ENCODE measurements at regions of chr14 and their contacts with region 1.

Region 1: GRCh38 chr14:62905566-62905965 is 139.7 kb downstream of the KCNH5 start:
- DNase-seq: no peak
- ATAC-seq: no peak
- H3K4me3 Mint-ChIP-seq: no peak overlapping the region
- H3K27ac Mint-ChIP-seq: no peak overlapping the region
- H3K4me1 Mint-ChIP-seq: peaks cover 16% of the 10 kb centered on the region
- H3K27me3 Mint-ChIP-seq: no peaks in the 10 kb centered on the region
- CTCF ChIP-seq: no peak

Region 2: DNA sequence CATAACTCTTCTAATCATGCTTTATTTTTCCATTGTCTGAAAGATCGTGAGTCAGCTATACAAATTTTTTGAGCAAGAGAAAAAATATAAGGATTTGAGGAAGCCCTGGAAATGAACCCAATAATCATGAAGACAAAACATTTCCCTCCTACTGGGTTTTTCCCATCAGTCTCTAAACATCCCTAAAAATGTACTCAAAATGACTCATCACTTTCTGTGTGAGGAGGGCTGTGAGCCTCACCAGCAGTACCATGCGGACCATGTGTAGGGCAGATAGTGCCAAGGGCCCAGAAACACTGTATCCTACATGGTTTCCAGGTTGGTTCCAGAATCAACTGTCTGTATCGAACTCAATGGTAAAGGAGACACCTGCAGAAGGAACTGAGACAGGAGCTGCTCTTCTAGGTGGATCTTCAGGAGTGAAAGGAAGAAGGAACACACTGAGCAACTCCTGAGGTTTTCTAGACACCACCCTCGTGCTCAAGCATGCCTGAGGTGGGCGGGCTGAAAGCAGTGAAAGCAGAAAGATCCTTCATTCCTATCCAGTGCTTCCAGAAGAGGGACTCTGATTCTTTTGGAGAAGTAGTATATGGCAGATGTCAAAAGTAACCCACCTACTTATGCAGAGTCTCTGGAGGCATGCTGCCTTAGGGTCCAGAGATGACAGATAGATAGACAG is 250.1 kb after region 1 on chr14:
- CTCF ChIA-PET with region 1: no interaction called
- POLR2A ChIA-PET with region 1: interaction called, 11 read pairs
- DNase-seq: no peak
- ATAC-seq: no peak
- H3K4me3 Mint-ChIP-seq: no peak overlapping the region
- H3K27ac Mint-ChIP-seq: no peak overlapping the region
- H3K4me1 Mint-ChIP-seq: peaks cover 5% of the 10 kb centered on the region
- H3K27me3 Mint-ChIP-seq: no peaks in the 10 kb centered on the region
- CTCF ChIP-seq: no peak